ENCODE measurements at regions of chr6 and their contacts with region 1.

Region 1: DNA sequence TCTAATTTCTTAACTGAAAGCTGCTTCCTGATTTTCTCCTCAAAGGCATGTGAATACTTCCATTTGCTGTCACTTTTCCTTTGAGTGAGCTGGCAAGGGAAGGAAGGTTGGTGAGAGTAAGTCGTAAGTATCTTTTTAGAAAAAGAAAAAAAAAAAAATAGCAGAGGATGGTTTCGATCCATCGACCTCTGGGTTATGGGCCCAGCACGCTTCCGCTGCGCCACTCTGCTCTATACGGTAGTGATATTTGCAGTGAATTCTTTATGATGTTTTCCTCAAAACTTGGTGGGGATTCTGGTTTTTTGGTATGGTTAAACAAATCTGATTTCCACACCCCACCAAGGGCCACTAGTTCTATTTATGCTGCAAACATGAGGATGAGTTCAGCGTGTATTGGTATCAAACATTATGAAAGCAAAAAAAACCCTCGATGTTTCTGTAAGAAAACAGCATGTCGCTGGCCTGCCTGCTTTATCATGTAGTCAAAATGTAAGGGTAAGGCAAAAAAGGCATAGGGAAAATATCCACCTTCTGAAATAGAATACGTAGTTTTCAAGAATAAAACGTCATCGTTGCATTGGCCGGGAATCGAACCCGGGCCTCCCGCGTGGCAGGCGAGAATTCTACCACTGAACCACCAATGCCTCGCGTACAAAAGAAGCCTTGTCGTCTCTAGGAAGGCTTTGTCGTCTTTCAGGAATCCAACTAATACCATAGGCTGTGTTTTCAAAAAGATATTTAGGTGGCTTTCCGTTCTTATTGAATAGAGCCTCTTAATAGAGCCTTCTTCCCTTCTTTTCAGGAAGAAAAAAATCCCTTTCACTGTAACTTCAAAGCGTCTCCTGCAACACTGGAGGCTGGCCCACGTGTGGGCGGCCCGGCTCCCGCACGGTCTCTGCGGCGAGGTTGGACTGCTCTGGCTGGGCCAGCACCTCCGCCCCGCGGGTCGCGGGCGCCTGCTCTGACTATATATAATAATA is 9.6 kb downstream of the OR2B2 start:
- DNase-seq: peak; percentile 77
- H3K4me3 Mint-ChIP-seq: peak overlapping the region; percentile 79
- H3K27ac Mint-ChIP-seq: peak overlapping the region; percentile 95
- H3K4me1 Mint-ChIP-seq: peaks cover 24% of the 10 kb centered on the region
- H3K27me3 Mint-ChIP-seq: peaks cover 26% of the 10 kb centered on the region

Region 2: GRCh38 chr6:27188885-27189418 is 713.7 kb before region 1 on chr6:
- intact Hi-C with region 1: no loop called
- DNase-seq: peak; percentile 25
- H3K4me3 Mint-ChIP-seq: peak overlapping the region; percentile 93
- H3K27ac Mint-ChIP-seq: no peak overlapping the region
- H3K4me1 Mint-ChIP-seq: peaks cover 15% of the 10 kb centered on the region
- H3K27me3 Mint-ChIP-seq: peaks cover 4% of the 10 kb centered on the region

Region 3: DNA sequence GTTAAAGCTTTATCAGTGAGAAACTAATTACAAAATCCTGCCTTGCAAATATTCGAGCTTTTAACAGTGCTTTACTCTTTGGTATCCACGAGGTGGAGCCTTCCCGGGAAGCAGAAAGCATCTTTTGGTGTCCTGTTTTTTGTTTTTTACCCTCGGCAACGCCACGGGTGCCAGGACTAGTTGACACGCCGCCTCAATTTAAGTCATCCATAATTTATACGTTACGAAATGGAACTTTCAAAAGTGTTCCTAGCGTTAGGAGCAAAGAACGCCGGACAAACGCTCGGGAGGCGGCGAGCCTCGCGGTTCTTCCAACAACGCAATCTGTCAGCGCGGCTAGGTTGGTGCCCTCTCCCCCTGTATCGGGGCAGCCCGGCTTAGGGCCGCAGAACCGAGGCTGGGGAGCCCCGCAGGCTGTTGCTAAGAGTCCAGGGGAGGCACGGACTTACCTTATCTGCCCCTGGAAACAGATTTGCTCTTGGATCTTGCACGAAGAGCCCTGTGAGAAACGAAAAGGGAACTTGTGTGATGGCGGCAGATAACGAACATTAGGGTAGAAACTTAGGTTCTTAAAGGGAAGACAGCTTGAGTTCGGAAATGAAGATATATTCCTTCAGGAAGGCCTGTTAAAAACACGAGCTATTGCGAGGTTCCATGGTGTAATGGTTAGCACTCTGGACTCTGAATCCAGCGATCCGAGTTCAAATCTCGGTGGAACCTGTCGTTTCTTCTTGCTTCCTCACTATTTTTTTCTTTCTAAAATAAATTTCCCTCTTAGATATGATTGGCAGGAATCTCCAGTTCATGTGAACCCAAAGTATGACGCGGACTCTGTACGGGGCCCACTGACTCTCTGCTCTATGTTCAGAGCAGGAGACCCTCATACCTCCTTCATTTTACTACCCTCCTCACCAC is 383.5 kb before region 1 on chr6:
- intact Hi-C with region 1: loop called (anchors 2 kb)
- DNase-seq: peak; percentile 40
- H3K4me3 Mint-ChIP-seq: peak overlapping the region; percentile 89
- H3K27ac Mint-ChIP-seq: peak overlapping the region; percentile 86
- H3K4me1 Mint-ChIP-seq: peaks cover 16% of the 10 kb centered on the region
- H3K27me3 Mint-ChIP-seq: peaks cover 25% of the 10 kb centered on the region

Region 4: DNA sequence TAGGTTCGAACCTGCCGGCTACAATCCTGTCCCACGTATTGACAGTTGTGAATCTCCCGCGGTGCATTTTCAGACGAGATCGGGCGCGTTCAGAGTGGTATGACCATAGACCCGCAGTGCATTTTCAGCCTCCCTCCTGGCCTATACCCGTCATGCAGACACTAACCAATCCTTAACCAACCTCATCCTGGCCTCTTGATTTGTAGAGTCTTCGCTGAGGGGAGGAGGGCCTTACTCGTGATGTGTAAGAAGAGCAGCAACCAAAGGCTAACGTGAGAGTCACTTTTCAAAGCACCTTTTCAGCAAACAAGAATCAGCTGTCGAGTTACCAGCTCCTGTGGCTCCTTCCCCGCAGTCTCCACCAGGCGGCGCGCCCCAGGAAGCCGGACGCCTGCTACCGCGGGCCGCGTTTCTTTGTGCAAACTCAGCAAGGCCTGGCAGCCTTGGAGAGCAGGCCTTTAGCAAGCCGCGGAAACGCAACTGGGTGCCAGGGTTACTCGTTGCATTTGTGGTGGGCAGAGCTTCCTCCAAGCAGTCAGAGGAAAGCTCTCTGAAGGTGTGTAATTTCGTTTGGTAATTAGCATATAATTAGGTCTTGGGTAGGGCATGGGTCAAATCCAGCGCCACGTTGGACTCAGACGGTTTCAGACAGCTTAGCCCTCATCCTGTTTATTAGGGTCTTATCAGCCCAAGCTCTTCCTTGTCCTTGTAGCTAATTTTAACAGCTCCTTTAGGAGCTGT is 130.2 kb before region 1 on chr6:
- intact Hi-C with region 1: loop called (anchors 1 kb)
- DNase-seq: peak; percentile 82
- H3K4me3 Mint-ChIP-seq: no peak overlapping the region
- H3K27ac Mint-ChIP-seq: peak overlapping the region; percentile 56
- H3K4me1 Mint-ChIP-seq: peaks cover 19% of the 10 kb centered on the region
- H3K27me3 Mint-ChIP-seq: peaks cover 22% of the 10 kb centered on the region

Region 5: DNA sequence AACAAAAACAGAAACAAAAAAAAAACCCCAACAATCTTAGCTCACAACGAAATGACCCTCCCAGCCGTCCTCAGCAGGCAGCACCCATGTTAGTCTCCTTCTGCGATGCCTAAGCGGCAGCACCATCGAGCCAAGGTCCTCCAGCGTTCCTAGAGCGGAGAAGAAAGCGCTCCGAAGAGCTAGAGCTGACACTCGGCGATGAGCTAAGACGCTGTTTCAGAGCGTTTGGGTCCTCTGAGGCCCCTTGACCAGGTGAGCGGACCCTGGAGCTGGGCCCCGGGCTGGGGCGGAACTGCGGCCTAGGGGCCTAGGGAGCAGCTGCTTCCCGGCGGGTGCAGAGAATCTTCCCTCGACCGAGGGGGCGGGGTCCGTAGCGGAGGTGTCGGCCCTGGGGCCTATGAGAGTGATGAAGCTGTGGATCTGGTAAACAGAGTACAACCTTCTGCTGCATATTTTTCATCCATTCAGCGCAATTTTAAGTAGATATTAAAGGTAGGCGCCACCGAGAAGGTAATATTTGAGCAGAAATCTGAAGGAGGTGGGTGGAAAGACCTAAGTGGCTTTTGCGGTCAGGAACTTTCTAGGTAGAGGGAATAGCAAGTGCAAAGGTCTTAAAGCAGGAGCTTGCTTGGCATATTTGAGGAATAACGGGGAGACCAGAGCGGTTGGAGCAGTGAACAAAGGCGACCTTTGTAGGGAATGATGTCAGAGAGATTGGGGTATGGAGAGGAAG is 364.5 kb after region 1 on chr6 and contains the start of gene ZSCAN26:
- intact Hi-C with region 1: loop called (anchors 2 kb)
- DNase-seq: peak; percentile 78
- H3K4me3 Mint-ChIP-seq: no peak within 1 kb of the TSS
- H3K27ac Mint-ChIP-seq: no peak within 1 kb of the TSS
- H3K4me1 Mint-ChIP-seq: peaks cover 9% of the 10 kb centered on the region
- H3K27me3 Mint-ChIP-seq: peaks cover 2% of the 10 kb centered on the region
- total RNA-seq, gene ZSCAN26: 5.4 and 6.0 TPM in 2 replicates

Region 6: DNA sequence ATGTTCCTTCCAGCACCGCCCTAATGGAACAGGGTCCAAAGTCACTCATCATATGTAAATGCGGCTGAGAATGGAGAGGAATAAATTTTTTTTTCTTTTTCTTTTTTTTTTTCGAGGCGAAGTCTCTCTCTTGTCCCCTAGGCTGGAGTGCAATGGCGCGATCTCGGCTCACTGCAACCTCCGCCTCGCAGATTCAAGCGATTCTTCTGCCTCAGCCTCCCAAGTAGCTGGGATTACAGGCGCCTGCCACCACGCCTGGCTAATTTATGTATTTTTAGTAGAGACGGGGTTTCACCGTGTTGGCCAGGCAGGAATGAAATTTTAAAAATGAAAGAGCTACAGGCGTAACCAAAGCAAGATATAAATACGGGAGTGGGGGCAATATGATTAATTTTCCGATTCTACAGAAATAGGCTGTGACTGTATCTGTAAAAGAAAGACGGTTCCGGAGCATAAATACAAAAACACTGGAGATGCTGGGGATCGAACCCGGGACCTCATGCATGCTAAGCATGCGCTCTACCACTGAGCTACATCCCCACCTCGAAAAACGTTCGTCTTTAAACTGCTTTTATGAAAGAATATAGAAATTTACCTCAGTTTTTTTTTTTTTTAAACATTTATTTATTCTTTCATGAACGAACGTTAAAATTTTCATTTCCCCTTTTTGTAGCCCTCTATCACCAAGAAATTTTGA is 755.3 kb after region 1 on chr6:
- intact Hi-C with region 1: loop called (anchors 5 kb)
- DNase-seq: no peak
- H3K4me3 Mint-ChIP-seq: peak overlapping the region; percentile 80
- H3K27ac Mint-ChIP-seq: peak overlapping the region; percentile 77
- H3K4me1 Mint-ChIP-seq: peaks cover 24% of the 10 kb centered on the region
- H3K27me3 Mint-ChIP-seq: peaks cover 66% of the 10 kb centered on the region

Region 7: DNA sequence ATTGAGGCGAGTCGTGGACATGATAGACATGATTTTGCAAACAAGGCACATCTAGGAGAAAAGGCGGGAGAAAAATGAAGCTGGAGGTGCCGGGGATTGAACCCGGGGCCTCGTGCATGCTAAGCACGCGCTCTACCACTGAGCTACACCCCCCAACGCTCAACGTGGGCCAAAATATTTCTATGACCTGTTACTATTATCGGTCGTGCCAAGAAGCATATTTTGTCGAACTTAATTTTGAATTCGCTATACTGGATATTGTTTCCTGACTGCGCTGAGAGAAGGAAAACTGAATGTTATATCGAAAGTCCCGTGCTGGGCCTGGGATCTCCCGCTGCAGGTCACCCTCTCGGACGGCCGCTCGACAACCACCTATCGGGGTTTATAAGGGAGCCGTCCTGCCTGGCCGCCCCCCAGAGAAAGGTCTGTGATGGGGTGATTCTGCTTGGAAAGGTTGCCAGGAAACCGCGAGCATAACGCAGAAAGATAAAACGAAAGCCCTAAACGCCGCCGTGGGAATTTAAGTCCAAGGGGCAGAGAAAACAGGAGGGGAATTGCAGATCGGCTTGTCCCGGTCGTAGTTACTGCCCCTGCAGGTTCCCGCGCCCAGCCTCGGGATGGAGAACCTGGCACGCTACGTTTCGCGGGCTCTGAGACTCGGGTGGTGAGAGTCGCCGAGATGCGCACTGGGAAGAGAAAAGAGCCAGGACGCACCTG is 961.1 kb after region 1 on chr6:
- intact Hi-C with region 1: loop called (anchors 5 kb)
- DNase-seq: peak; percentile 80
- H3K4me3 Mint-ChIP-seq: peak overlapping the region; percentile 94
- H3K27ac Mint-ChIP-seq: peak overlapping the region; percentile 93
- H3K4me1 Mint-ChIP-seq: peaks cover 47% of the 10 kb centered on the region
- H3K27me3 Mint-ChIP-seq: peaks cover 17% of the 10 kb centered on the region